ENCODE measurements at regions of chr2 and their contacts with region 1.

Region 1: GRCh38 chr2:73085691-73086360 is 14.3 kb upstream of the SFXN5 start:
- DNase-seq: peak; percentile 95
- ATAC-seq: peak; percentile 80
- H3K4me3 Mint-ChIP-seq: no peak overlapping the region
- H3K27ac Mint-ChIP-seq: no peak overlapping the region
- H3K4me1 Mint-ChIP-seq: peaks cover 18% of the 10 kb centered on the region
- H3K27me3 Mint-ChIP-seq: no peaks in the 10 kb centered on the region
- CTCF ChIP-seq: peak; percentile 81

Region 2: DNA sequence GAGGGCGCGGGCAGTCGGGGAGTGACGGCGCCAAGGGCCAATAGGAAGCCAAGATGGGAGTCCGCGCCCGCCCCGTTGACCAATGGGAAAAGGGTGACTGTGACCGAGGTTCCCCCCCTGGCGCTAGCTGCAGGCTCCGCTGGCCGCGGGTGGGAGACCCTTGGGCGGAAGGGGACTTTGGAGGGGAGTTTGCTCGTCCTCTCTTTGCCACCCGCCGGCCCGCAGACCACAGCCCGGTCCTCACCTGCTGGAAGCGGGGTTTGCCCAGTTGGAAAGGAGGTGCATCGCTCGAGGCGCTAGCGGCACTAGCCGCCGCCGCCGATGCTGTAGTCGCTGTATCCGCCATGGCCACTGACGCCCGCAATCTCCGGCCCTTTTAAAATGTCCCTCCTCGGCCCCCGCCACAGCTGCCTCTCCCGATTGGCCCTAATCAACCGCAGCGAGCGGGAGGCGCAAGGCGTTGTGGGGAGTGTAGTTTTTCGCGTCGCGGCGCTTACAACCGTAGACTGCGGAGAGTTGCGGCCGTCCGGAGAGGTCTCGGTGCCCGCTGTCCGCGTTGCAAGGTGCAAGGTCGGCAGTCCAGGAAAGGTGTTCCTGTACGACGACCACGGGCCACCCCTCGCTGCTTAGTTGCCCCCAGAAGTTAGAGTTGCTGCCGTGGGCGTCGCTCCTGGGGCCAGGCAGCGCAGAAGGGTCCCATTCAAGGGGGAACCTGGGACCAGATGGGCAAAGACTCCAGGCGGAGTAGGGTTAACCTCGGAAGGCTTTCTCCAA is 14.3 kb before region 1 on chr2 and contains the start of gene SFXN5:
- CTCF ChIA-PET with region 1: interaction called, 15 read pairs
- POLR2A ChIA-PET with region 1: interaction called, 6 read pairs
- DNase-seq: peak; percentile 99
- ATAC-seq: peak; percentile 86
- H3K4me3 Mint-ChIP-seq: peak within 1 kb of the TSS; percentile 77
- H3K27ac Mint-ChIP-seq: peak within 1 kb of the TSS; percentile 78
- H3K4me1 Mint-ChIP-seq: peaks cover 22% of the 10 kb centered on the region
- H3K27me3 Mint-ChIP-seq: no peaks in the 10 kb centered on the region; the same call in 1 of the 2 replicates
- CTCF ChIP-seq: no peak
- total RNA-seq, gene SFXN5: 23.1 to 25.9 TPM (median 23.6 TPM) in 3 replicates

Region 3: GRCh38 chr2:73107211-73107926 is 21.5 kb after region 1 on chr2:
- CTCF ChIA-PET with region 1: interaction called, 40 read pairs
- POLR2A ChIA-PET with region 1: interaction called, 3 read pairs
- DNase-seq: no peak
- ATAC-seq: no peak
- H3K4me3 Mint-ChIP-seq: no peak overlapping the region
- H3K27ac Mint-ChIP-seq: peak overlapping the region; percentile 82; the same call in 1 of the 2 replicates
- H3K4me1 Mint-ChIP-seq: peaks cover 37% of the 10 kb centered on the region
- H3K27me3 Mint-ChIP-seq: peaks cover 5% of the 10 kb centered on the region; the same call in 1 of the 2 replicates
- CTCF ChIP-seq: no peak

Region 4: DNA sequence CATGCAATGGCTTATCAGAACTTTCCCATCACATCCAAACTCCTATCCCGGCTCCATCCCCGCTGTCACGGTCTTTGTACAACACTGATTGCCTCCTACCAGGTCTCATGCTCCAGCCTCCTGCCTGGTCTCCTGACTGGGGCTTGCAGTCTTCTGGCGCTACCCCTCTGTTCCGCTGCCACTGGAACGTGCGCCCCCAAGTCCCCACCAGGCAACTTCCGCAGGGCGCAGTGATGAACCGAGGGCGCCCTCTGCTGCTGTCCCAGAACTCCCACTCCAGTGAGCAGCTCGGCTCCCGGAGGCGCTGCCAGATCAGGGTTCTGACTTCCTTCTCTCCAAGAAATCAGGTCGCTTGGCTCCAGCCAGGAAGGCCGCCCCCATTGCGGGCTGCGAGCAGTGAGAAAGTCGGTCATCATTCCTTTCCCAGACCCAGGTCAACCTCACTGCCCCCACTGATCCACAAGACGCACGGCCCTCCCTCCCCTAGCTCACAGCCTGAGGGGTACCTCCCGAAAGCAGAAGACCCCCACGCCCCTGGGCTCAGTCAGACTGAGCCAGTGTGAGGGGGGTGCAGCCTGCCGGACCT is 70.8 kb after region 1 on chr2:
- CTCF ChIA-PET with region 1: interaction called, 113 read pairs
- POLR2A ChIA-PET with region 1: interaction called, 5 read pairs
- DNase-seq: peak; percentile 88
- ATAC-seq: peak; percentile 99
- H3K4me3 Mint-ChIP-seq: peak overlapping the region; percentile 62
- H3K27ac Mint-ChIP-seq: no peak overlapping the region
- H3K4me1 Mint-ChIP-seq: peaks cover 6% of the 10 kb centered on the region
- H3K27me3 Mint-ChIP-seq: peaks cover 24% of the 10 kb centered on the region
- CTCF ChIP-seq: peak; percentile 51

Region 5: DNA sequence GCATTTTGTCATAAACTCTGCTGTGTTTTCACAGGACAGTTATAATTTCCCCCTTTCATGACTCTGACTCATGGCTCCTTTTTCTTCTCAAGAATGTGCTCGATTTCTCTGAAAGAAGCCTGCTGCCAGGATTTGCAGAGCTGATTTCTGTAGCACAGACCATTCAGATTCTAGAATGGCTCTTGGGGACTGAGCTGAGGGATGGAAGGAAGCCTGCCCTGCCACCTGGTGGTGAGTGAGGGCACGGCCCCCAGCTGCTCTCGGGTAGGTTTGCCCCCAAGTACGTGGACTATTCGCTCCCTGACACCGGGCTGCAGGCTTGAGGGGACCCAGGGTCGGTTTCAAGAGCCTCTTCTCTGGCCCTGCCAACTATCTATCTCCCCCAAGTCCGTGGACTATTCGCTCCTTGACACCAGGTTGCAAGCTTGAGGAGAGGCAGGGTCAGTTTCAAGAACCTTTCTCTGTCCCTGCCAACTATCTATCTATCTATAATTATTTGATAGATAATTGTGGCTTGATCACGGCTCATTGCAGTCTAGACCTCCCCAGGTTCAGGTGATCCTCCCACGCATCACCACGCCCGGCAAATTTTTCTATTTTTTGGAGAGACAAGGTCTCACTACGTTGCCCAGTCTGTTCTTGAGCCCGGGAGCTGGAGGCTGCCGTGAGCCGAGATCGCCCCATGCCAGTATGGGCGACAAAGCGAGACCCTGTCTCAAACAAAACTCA is 126.8 kb after region 1 on chr2:
- CTCF ChIA-PET with region 1: interaction called, 24 read pairs
- POLR2A ChIA-PET with region 1: no interaction called
- DNase-seq: peak; percentile 86
- ATAC-seq: peak; percentile 77
- H3K4me3 Mint-ChIP-seq: no peak overlapping the region
- H3K27ac Mint-ChIP-seq: peak overlapping the region; percentile 57
- H3K4me1 Mint-ChIP-seq: peaks cover 35% of the 10 kb centered on the region
- H3K27me3 Mint-ChIP-seq: peaks cover 19% of the 10 kb centered on the region
- CTCF ChIP-seq: peak; percentile 81

Region 6: DNA sequence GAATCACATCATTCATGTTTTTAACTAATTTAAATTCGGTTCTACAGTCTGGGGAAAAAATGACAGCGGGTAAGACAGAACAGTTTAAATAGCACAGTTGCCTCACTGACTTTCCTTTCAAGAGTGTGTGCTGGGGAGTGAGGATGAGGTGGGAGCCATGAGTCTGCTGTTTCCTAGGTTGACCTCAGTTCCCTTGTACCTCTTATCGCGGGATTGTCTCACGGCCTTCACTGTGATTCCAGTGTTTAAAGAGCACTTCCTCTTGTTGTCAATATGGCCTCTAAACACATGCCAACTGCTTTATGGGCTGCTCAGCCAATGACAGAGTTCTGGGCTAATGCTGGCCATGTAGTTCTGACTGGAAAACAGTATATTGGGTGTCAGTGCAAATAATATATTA is 258.2 kb after region 1 on chr2:
- CTCF ChIA-PET with region 1: no interaction called
- POLR2A ChIA-PET with region 1: no interaction called
- DNase-seq: no peak
- ATAC-seq: no peak
- H3K4me3 Mint-ChIP-seq: no peak overlapping the region
- H3K27ac Mint-ChIP-seq: no peak overlapping the region
- H3K4me1 Mint-ChIP-seq: no peaks in the 10 kb centered on the region
- H3K27me3 Mint-ChIP-seq: peaks cover 18% of the 10 kb centered on the region
- CTCF ChIP-seq: no peak

Measured in WTC11 (cell line).